ENCODE measurements at regions of chr10 and their contacts with region 1.

Region 1: GRCh38 chr10:116742367-116743265 is at the start of gene HSPA12A:
- DNase-seq: peak; percentile 80 to 90 (median 85)
- H3K4me3 ChIP-seq: peak within 1 kb of the TSS; percentile 92
- H3K27ac ChIP-seq: peak within 1 kb of the TSS; percentile 79 to 83
- H3K4me1 ChIP-seq: peaks cover 14% of the 10 kb centered on the region
- H3K27me3 ChIP-seq: no peaks in the 10 kb centered on the region
- CTCF ChIP-seq: no peak
- EP300 ChIP-seq: no peak
- POLR2A ChIP-seq: peak; percentile 94
- total RNA-seq, gene HSPA12A: 27.7 to 47.5 (median 40.5) TPM

Region 2: DNA sequence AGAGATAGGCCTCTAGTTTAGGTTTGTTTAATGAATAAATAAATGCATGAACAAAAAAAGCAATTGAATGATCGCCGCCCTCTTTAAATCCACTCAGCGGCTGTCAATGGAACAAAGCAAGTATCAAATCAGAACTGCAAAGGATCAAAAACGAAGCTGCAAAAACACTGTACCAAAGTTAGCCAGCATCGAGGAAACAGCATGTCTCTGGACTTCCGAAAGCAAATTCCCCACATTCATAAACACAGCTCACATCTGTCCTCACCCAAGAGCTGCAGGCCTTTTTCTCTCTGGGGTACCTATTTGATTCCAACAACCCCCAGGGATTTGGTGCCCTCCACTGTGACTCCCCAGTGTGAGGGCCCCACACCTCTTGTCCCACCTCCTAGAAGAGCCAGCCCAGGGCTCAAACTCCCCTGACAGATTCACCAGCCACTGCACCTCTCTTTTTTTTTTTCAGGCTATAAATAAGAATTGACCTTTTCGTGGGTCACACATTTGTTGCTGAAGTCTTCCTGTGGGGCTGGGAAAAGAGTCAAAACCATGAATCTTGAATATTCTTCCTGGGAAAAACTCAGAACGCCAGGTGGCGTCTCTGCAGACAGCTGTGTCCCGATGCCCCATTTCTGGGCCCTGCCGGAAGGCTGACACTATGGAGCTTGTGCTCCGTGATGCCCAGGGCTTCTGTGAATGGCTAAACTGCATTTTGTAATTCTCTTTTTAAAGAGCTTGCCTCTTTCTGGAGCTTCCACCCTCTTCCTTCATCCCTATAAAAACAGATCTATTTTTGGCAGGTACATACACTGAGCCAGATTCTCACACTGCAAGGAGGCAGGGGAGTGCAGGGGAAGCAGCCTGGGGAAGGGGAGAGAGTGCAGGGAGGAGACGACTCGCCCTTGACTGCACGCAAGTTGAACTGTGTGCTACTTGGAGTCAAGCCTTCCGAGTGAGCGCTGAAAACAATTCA is 52.0 kb before region 1 on chr10:
- intact Hi-C with region 1: loop called (anchors 2 to 10 kb)
- DNase-seq: peak; percentile 67 to 76 (median 73)
- H3K4me3 ChIP-seq: no peak overlapping the region
- H3K27ac ChIP-seq: peak overlapping the region in 1 of 2 donors; percentile 69
- H3K4me1 ChIP-seq: peaks cover 44% of the 10 kb centered on the region
- H3K27me3 ChIP-seq: no peaks in the 10 kb centered on the region
- CTCF ChIP-seq: peak; percentile 36 to 59 (median 40)
- EP300 ChIP-seq: no peak
- POLR2A ChIP-seq: no peak

Region 3: GRCh38 chr10:116765547-116766162 is 23.0 kb after region 1 on chr10:
- intact Hi-C with region 1: no loop called
- DNase-seq: no peak
- H3K4me3 ChIP-seq: no peak overlapping the region
- H3K27ac ChIP-seq: no peak overlapping the region
- H3K4me1 ChIP-seq: peaks cover 12% of the 10 kb centered on the region
- H3K27me3 ChIP-seq: no peaks in the 10 kb centered on the region
- CTCF ChIP-seq: no peak
- EP300 ChIP-seq: no peak
- POLR2A ChIP-seq: no peak

Measured in ovary (tissue), 10 donors.